ENCODE measurements at regions of chr1 and their contacts with region 1.

Region 1: DNA sequence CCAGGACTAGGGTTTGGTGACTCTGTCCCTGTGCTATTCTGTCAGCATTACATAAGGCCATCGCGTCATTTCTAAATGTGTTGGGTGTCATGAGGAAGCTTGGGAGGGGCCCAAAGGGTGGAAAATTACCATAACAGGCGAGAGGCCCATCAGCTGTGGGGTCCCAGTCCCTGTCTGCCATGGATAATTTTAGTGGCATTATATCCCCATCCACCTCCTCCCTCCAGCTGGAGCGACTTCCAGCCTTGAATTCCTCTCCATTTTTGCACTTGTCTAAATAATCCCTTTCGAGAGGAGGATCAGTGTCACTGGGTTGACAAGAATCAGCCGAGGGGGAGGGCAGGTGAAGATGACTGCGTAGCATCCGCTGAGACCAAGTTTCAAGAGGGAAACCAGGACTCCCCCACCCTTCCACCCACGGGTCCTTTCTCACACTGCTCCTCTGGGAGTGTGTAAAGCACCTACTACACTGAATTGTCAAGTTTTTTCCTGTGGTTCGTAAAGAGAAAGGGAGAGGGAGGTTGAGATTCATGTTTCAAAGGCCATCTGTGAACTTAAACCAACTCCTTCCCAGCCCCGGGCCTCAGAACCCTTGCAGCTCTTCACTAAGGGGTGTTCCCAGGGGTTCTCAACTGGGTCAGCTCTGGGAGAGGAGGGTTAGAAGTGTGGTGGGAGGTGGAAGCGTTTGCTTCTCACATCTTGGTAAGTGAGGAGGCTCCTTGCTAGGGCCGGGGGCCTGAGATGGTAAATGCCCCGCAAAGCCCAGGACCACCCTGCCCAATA is 29.2 kb downstream of the VASH2 start:
- DNase-seq: peak; percentile 30

Region 2: GRCh38 chr1:212915245-212916091 is 64.1 kb before region 1 on chr1:
- intact Hi-C with region 1: loop called in 1 of 2 experiments (anchors 10 kb)
- DNase-seq: no peak

Region 3: GRCh38 chr1:213020016-213020415 is 40.5 kb after region 1 on chr1:
- intact Hi-C with region 1: no loop called
- DNase-seq: no peak

Region 4: GRCh38 chr1:213050745-213051126 is 71.2 kb after region 1 on chr1:
- intact Hi-C with region 1: no loop called
- DNase-seq: no peak

Measured in posterior vena cava (tissue), 2 donors.